CD8-positive, alpha-beta T cell (primary cell): ENCODE measurements at regions of chr15 and their contacts with region 1.

Region 1: GRCh38 chr15:78241007-78241406 is 6.6 kb upstream of the ACSBG1 start:
- DNase-seq: peak; percentile 65 to 90 (median 81)
- ATAC-seq: peak; percentile 96
- H3K4me3 ChIP-seq: no peak overlapping the region
- H3K4me3 Mint-ChIP-seq: no peak overlapping the region
- H3K27ac ChIP-seq: no peak overlapping the region
- H3K27ac Mint-ChIP-seq: no peak overlapping the region
- H3K4me1 ChIP-seq: no peaks in the 10 kb centered on the region
- H3K4me1 Mint-ChIP-seq: peaks cover 1% of the 10 kb centered on the region
- H3K27me3 ChIP-seq: peaks cover 0 to 3% of the 10 kb centered on the region in 2 experiments
- H3K27me3 Mint-ChIP-seq: no peaks in the 10 kb centered on the region
- CTCF ChIP-seq: peak; percentile 79

Region 2: DNA sequence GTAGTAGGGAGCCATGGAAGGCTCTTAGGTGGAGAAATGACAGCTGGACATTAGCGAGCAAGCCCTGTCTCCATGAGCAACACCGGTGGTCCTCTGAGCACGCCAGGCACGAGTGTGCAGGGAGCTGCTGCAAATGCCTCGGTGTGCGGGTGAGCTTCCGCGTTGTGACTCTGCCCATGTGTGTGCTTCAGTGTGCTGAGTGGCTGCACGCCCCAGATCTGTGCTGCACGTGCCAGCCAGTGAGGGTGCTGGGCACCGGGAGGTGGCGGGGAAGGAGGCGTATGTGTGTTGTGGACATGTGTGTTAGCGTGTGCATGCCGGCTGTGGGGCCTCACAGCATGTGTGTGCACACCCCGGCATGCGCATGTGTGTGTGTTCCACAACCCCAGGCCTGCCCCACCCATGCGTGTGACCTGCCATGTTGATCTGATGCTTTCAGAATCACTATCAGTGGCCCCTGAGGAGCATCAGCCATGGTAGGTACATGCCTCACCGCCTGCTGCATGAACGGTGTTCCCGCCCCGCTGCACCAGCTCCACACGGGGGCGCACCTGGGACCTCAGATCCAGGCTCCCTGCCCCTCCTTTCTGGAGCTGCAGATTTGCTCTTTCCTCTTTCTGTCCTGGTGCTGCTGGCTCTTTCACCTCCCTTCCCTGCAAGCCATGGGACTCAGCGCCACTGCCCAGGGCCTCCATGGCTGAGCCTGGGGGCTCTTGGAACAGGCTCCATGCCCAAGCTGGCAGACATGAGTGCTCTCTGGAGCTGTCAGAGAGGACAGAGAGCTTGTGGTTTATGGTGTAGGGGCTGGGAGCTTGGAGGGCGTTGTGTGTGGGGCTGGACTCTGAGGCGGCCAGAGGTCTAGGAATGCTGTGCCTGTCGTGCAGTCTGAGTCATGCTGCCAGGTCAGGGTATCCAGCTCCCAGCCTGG is 332.9 kb before region 1 on chr15:
- CTCF ChIA-PET with region 1: interaction called, 6 read pairs
- POLR2A ChIA-PET with region 1: no interaction called
- intact Hi-C with region 1: loop called in 1 of 2 experiments (anchors 1 kb)
- DNase-seq: peak in 7 of 9 experiments; percentile 28 to 59 (median 45)
- ATAC-seq: peak; percentile 40
- H3K4me3 ChIP-seq: no peak overlapping the region
- H3K4me3 Mint-ChIP-seq: no peak overlapping the region
- H3K27ac ChIP-seq: no peak overlapping the region
- H3K27ac Mint-ChIP-seq: no peak overlapping the region
- H3K4me1 ChIP-seq: no peaks in the 10 kb centered on the region
- H3K4me1 Mint-ChIP-seq: no peaks in the 10 kb centered on the region
- H3K27me3 ChIP-seq: no peaks in the 10 kb centered on the region
- H3K27me3 Mint-ChIP-seq: peaks cover 3% of the 10 kb centered on the region
- CTCF ChIP-seq: no peak

Region 3: DNA sequence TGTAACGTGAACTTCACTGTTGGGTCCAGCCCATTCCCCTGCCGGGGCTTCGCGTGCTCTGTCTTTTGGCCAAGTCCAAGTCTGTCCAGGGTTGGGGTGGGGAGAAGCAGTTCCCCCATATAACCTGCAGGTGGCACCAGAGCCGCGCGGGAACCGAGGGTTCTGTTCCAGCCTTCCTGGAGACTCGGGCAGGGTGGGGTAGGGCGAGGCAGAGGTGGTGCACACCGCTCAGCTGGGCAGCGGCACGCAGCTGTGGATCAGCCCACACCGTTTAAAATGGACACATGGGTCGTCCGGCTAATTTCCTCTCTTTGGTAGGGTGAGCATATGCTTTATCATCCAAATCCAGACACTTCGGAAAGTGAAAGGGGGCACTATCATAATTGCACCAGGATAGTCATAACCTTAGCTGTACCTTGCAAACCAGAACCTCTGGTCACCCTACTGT is 281.6 kb before region 1 on chr15:
- CTCF ChIA-PET with region 1: interaction called, 32 read pairs
- POLR2A ChIA-PET with region 1: no interaction called
- intact Hi-C with region 1: loop called (anchors 1 kb)
- DNase-seq: peak; percentile 55 to 86 (median 73)
- ATAC-seq: peak; percentile 100
- H3K4me3 ChIP-seq: no peak overlapping the region
- H3K4me3 Mint-ChIP-seq: no peak overlapping the region
- H3K27ac ChIP-seq: no peak overlapping the region
- H3K27ac Mint-ChIP-seq: no peak overlapping the region
- H3K4me1 ChIP-seq: peaks cover 3% of the 10 kb centered on the region
- H3K4me1 Mint-ChIP-seq: no peaks in the 10 kb centered on the region
- H3K27me3 ChIP-seq: no peaks in the 10 kb centered on the region
- H3K27me3 Mint-ChIP-seq: peaks cover 2% of the 10 kb centered on the region
- CTCF ChIP-seq: peak; percentile 97

Region 4: DNA sequence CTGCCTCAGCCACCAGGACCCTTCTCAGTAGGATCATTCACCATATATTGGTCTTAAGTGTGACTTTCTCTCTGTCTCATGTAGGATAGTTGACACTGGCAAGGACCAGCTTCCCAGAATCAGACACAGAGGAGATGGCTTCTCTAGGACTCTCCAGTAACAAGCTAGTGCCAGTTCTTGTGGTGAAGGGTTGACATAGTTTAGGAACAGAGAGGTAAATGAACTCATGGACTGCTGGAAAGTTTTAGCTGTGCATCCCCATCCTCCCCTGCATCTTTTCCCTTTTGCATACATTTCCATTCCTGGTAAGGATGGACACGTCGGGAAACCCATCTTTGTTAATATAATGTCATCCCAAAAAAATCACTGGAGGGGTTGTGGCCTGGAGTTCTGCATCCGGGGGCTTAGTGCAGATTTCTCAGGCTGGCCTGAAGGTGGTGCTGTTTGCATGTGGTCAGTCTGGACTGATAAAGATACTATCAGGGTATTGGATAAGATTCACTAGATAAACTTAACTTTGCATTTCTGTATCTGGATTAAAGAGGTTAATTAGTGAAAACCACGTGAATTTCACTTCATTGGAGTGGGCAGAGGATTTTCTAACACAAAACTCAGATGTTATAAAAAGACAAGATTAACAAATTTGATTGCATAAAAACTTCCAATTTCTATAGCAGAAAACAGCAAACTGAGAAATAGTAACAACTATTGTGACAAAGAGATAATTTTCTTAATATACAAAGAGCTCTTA is 274.3 kb before region 1 on chr15:
- CTCF ChIA-PET with region 1: interaction called, 32 read pairs
- POLR2A ChIA-PET with region 1: no interaction called
- intact Hi-C with region 1: no loop called
- DNase-seq: peak in 8 of 9 experiments; percentile 30 to 71 (median 55)
- ATAC-seq: peak; percentile 42
- H3K4me3 ChIP-seq: no peak overlapping the region
- H3K4me3 Mint-ChIP-seq: no peak overlapping the region
- H3K27ac ChIP-seq: no peak overlapping the region
- H3K27ac Mint-ChIP-seq: no peak overlapping the region
- H3K4me1 ChIP-seq: no peaks in the 10 kb centered on the region
- H3K4me1 Mint-ChIP-seq: no peaks in the 10 kb centered on the region
- H3K27me3 ChIP-seq: no peaks in the 10 kb centered on the region
- H3K27me3 Mint-ChIP-seq: peaks cover 2% of the 10 kb centered on the region
- CTCF ChIP-seq: peak; percentile 70

Region 5: GRCh38 chr15:78177447-78177873 is 63.5 kb before region 1 on chr15:
- CTCF ChIA-PET with region 1: interaction called, 4 read pairs
- POLR2A ChIA-PET with region 1: no interaction called
- intact Hi-C with region 1: loop called in 1 of 2 experiments (anchors 2 kb)
- DNase-seq: peak in 5 of 9 experiments; percentile 36 to 49 (median 38)
- ATAC-seq: peak; percentile 41
- H3K4me3 ChIP-seq: no peak overlapping the region
- H3K4me3 Mint-ChIP-seq: no peak overlapping the region
- H3K27ac ChIP-seq: no peak overlapping the region
- H3K27ac Mint-ChIP-seq: no peak overlapping the region
- H3K4me1 ChIP-seq: peaks cover 17% of the 10 kb centered on the region
- H3K4me1 Mint-ChIP-seq: peaks cover 25% of the 10 kb centered on the region
- H3K27me3 ChIP-seq: no peaks in the 10 kb centered on the region
- H3K27me3 Mint-ChIP-seq: peaks cover 3% of the 10 kb centered on the region
- CTCF ChIP-seq: peak; percentile 18

Region 6: GRCh38 chr15:78257681-78258080 is 16.7 kb after region 1 on chr15:
- CTCF ChIA-PET with region 1: interaction called, 13 read pairs
- POLR2A ChIA-PET with region 1: no interaction called
- intact Hi-C with region 1: no loop called
- DNase-seq: no peak
- ATAC-seq: no peak
- H3K4me3 ChIP-seq: no peak overlapping the region
- H3K4me3 Mint-ChIP-seq: no peak overlapping the region
- H3K27ac ChIP-seq: no peak overlapping the region
- H3K27ac Mint-ChIP-seq: no peak overlapping the region
- H3K4me1 ChIP-seq: no peaks in the 10 kb centered on the region
- H3K4me1 Mint-ChIP-seq: no peaks in the 10 kb centered on the region
- H3K27me3 ChIP-seq: no peaks in the 10 kb centered on the region
- H3K27me3 Mint-ChIP-seq: no peaks in the 10 kb centered on the region
- CTCF ChIP-seq: no peak

Region 7: GRCh38 chr15:78340231-78341056 is 99.4 kb after region 1 on chr15 and contains the start of gene CRABP1:
- CTCF ChIA-PET with region 1: no interaction called
- POLR2A ChIA-PET with region 1: no interaction called
- intact Hi-C with region 1: no loop called
- DNase-seq: no peak
- ATAC-seq: no peak
- H3K4me3 ChIP-seq: no peak within 1 kb of the TSS
- H3K4me3 Mint-ChIP-seq: no peak within 1 kb of the TSS
- H3K27ac ChIP-seq: no peak within 1 kb of the TSS
- H3K27ac Mint-ChIP-seq: no peak within 1 kb of the TSS
- H3K4me1 ChIP-seq: no peaks in the 10 kb centered on the region
- H3K4me1 Mint-ChIP-seq: peaks cover 2% of the 10 kb centered on the region
- H3K27me3 ChIP-seq: peaks cover 9% of the 10 kb centered on the region in 2 experiments
- H3K27me3 Mint-ChIP-seq: peaks cover 35% of the 10 kb centered on the region
- CTCF ChIP-seq: no peak
- total RNA-seq, gene CRABP1: not detected